ENCODE measurements at regions of chr10 and their contacts with region 1.

Region 1: GRCh38 chr10:27558612-27559020 is 54.5 kb downstream of the RAB18 start:
- DNase-seq: no peak
- H3K4me3 ChIP-seq: no peak overlapping the region
- H3K27ac ChIP-seq: no peak overlapping the region
- H3K4me1 ChIP-seq: peaks cover 0 to 4% (median 0%) of the 10 kb centered on the region in 4 donors
- H3K27me3 ChIP-seq: no peaks in the 10 kb centered on the region
- CTCF ChIP-seq: peak; percentile 63 to 80 (median 73)
- EP300 ChIP-seq: no peak
- POLR2A ChIP-seq: no peak

Region 2: GRCh38 chr10:27658788-27659187 is 100.2 kb after region 1 on chr10:
- intact Hi-C with region 1: loop called (anchors 5 kb)
- DNase-seq: no peak
- H3K4me3 ChIP-seq: no peak overlapping the region
- H3K27ac ChIP-seq: no peak overlapping the region
- H3K4me1 ChIP-seq: no peaks in the 10 kb centered on the region
- H3K27me3 ChIP-seq: no peaks in the 10 kb centered on the region
- CTCF ChIP-seq: no peak
- EP300 ChIP-seq: no peak
- POLR2A ChIP-seq: no peak

Region 3: GRCh38 chr10:28179006-28179742 is 620.6 kb after region 1 on chr10:
- intact Hi-C with region 1: loop called (anchors 2 kb)
- DNase-seq: no peak
- H3K4me3 ChIP-seq: peak overlapping the region in 1 of 4 donors; percentile 32
- H3K27ac ChIP-seq: peak overlapping the region; percentile 61 to 75 (median 68)
- H3K4me1 ChIP-seq: peaks cover 0 to 44% (median 38%) of the 10 kb centered on the region in 4 donors
- H3K27me3 ChIP-seq: no peaks in the 10 kb centered on the region
- CTCF ChIP-seq: peak; percentile 30 to 78 (median 68)
- EP300 ChIP-seq: no peak
- POLR2A ChIP-seq: no peak

Region 4: DNA sequence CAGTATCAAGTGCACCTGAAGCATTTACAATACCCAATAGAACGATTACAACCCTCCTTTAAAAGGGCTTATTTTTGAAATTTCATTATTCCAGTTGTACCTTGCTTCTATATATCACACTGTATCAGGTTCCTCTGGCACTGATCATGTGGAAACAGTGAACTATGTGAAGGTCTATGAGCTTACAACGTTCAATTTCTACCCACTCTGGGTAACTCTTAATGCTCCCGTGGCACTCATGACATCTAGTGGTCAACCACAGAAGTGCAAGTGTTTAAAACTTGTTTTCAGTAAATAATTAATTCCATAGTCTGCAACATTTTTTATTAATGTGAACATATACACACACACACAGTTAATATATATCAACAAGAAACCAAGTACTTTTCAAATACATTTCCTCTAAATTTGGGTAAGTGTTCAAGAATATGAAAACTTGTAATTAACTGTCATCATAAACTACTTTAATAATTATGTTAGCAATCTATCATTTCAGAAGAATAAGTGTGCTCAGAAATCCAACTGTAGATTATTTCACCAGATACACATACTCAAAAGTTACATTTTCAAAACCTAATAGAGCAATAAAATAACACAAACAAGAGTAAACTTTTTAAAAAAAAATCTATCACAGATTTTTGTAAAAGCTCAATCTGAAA is 683.3 kb after region 1 on chr10:
- intact Hi-C with region 1: loop called (anchors 1 kb)
- DNase-seq: no peak
- H3K4me3 ChIP-seq: no peak overlapping the region
- H3K27ac ChIP-seq: no peak overlapping the region
- H3K4me1 ChIP-seq: peaks cover 0 to 24% (median 13%) of the 10 kb centered on the region in 4 donors
- H3K27me3 ChIP-seq: no peaks in the 10 kb centered on the region
- CTCF ChIP-seq: peak; percentile 69 to 95 (median 90)
- EP300 ChIP-seq: no peak
- POLR2A ChIP-seq: no peak